ENCODE measurements at regions of chr15 and their contacts with region 1.

Region 1: DNA sequence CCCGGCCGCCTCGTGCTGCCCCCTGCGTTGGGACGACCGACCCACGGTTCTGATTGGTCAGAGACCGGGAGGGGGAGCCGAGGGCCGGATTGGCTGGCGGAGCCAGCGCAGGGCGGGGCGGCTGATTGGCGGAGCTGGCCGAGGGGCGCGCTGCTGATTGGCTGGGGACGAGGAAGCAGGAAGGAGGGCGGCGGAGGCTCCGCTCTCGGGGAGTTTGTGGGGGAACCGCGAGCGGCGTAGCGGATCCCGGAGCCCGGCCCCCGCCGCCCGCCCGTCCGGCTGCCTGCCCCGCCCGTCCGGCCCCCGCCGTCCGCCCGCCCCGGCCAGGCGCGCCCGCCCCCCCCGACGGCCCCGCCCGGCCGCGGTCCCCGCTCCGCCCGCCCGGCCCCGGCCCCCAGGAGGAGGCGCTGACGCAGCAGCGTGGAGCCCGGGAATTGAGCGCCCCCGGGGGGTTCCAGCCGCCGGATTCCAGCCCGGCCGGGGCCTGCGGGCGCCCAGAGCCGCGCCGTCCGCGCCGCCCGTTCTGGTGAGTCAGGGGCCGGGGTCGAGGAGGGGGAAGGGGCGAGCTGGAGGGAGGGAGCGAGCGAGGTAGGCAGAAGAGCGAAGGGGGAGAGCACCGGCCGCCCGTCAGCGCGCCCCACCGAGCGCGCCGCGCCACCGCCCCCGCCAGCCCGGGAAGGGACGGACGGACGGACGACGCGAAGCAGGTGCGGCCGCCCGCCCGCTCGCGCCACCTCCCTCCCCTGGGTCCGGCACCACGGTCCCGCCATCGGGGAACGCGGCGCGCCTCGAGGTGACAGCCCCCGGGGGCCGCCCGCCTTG is at the start of gene BAHD1:
- DNase-seq: peak; percentile 92
- H3K4me3 ChIP-seq: peak within 1 kb of the TSS; percentile 57 to 91 (median 62)
- H3K27ac ChIP-seq: no peak within 1 kb of the TSS
- H3K4me1 ChIP-seq: peaks cover 6% of the 10 kb centered on the region
- H3K27me3 ChIP-seq: peaks cover 38 to 40% of the 10 kb centered on the region in 2 experiments
- CTCF ChIP-seq: peak in 1 of 2 donors; percentile 25
- POLR2A ChIP-seq: no peak
- total RNA-seq, gene BAHD1: 19.1 and 19.7 TPM in 2 replicates

Region 2: GRCh38 chr15:40470423-40471104 is 29.6 kb after region 1 on chr15 and contains the start of gene CHST14:
- CTCF ChIA-PET with region 1: interaction called, 4 read pairs
- POLR2A ChIA-PET with region 1: no interaction called
- dilution Hi-C with region 1: no loop called
- intact Hi-C with region 1: loop called (anchors 2 kb)
- DNase-seq: peak; percentile 58
- H3K4me3 ChIP-seq: peak within 1 kb of the TSS; percentile 19 to 66 (median 64)
- H3K27ac ChIP-seq: peak within 1 kb of the TSS; percentile 0
- H3K4me1 ChIP-seq: peaks cover 6% of the 10 kb centered on the region
- H3K27me3 ChIP-seq: no peaks in the 10 kb centered on the region
- CTCF ChIP-seq: no peak
- POLR2A ChIP-seq: peak; percentile 48
- total RNA-seq, gene CHST14: 45.9 and 49.2 TPM in 2 replicates

Region 3: DNA sequence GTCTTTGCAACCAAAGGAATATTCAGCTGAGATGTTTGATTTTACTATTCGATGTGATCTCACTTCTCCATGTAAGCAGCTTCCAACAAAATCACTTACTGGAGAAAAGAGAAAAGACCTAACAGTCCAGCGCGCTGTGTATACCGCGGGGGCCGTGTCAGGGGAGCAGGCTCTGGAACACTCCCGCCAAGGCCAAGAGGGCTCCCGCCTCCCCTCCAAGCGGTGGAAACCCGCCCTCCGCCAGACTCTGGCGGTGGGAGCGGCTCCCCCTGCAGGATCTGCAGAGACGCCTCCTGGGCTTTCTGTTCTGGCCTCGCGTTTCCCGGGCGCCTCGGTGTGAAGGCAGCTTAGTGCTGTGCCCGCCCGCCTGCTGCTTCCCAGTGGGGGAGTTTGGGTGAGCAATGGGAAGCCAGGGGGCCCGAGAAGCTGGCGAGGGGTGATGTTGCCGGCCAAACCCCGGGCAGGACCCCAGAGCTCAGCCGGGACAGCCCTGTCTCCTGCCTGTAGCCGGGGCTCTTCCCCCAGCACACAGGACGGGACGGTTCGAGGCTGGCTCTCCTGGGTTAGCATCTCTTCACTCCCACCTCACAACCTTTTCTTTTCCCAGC is 66.1 kb after region 1 on chr15:
- CTCF ChIA-PET with region 1: interaction called, 4 read pairs
- POLR2A ChIA-PET with region 1: no interaction called
- dilution Hi-C with region 1: no loop called
- intact Hi-C with region 1: loop called (anchors 5 kb)
- DNase-seq: peak; percentile 76
- H3K4me3 ChIP-seq: peak overlapping the region in 2 of 3 experiments; percentile 11 to 51
- H3K27ac ChIP-seq: no peak overlapping the region
- H3K4me1 ChIP-seq: no peaks in the 10 kb centered on the region
- H3K27me3 ChIP-seq: peaks cover 0 to 3% of the 10 kb centered on the region in 2 experiments
- CTCF ChIP-seq: peak; percentile 64 to 83
- POLR2A ChIP-seq: no peak